ENCODE measurements at regions of chr1 and their contacts with region 1.

Region 1: DNA sequence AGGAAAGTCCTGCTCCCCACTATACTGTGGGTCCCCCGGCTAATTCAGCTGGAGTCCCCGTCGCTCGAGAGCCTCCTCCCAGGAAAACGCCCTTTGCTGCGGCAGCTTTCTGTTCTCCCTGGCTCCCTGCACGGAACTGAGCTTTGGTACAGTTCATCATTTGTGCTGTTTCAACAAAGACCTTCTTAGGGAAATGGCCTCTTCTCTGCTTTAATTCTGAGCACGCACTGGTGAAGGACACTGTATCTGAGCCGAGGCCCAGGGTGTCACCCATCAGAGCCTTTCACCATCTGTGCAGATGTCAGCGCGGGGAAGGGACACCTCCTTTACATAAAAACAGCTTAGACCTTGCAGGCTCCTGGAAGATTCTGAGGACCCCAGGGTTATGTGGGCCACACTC is 13.5 kb upstream of the PEX10 start:
- DNase-seq: no peak
- H3K4me3 ChIP-seq: no peak overlapping the region
- H3K27me3 ChIP-seq: no peaks in the 10 kb centered on the region; the same call in none of the 2 replicates
- CTCF ChIP-seq: no peak

Region 2: DNA sequence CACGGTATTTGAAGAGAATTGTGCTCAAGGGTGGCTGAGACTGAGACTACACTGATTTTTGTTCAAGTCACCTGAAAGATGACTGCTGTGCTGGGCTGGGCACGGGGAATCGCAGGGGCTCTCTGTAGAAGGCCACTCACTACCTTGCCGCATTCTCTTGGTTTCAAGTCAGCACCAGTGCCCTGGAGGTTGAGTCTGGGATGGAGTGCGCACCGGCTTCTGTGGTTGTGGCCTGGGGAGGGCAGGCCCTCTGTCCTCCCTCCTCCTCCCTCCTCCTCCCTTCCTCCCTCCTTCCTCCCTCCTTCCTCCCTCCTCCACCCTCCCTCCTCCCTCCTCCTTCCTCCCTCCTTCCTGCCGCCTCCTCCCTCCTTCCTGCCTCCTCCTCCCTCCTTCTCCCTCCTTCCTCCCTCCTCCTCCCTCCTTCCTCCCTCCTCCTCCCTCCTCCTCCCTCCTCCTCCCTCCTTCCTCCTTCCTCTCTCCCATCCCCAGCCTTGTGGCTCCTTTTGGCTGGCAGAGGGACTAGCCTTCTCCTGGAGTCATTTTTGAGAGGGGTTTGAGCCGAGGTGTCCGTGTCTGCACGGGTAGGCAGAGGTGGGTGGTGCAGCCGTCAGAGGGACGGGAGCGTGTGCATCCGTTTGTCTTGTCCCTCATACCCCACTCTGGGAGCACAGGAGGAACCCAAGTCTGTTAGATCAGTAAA is 24.8 kb before region 1 on chr1:
- CTCF ChIA-PET with region 1: no interaction called
- POLR2A ChIA-PET with region 1: no interaction called
- DNase-seq: no peak
- H3K4me3 ChIP-seq: no peak overlapping the region
- H3K27me3 ChIP-seq: no peaks in the 10 kb centered on the region
- CTCF ChIP-seq: no peak

Region 3: DNA sequence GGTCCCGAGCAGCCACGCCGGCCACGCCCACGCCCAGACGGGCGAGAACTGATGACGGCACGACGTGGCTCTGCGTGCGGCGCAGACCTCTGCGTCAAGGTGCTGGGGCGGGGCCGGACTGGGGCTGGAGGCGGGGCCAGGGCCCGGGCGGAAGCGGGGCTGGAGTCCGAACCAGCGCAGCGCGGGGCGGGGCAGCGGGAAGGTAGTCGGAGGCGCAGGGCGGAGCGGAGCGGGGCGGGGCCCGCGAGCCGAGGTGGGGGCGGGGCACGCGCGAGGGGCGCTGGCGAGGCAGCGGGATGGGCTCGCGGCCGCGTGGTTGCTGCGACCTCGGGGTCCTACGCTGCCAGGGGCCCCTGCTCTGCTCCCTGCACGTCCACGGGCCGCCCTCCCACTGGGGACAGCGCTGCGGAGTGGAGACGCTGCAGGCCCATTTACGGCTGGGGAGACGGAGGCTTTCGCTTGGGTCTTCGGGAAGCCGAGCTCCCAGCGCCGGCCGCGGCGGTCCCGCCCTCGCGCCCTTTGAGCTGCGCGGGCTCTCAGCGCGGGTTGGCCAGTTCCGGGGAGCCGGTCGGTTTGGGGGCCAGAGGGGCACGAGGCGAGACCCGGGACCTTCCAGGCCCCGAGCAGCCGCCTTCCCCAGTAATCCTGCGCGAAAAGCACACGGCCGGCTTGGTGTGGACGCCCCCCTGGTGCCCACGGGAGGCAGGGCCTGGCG is 13.2 kb before region 1 on chr1 and contains the start of gene PEX10:
- CTCF ChIA-PET with region 1: interaction called, 13 read pairs
- POLR2A ChIA-PET with region 1: no interaction called
- DNase-seq: peak; percentile 59
- H3K4me3 ChIP-seq: peak within 1 kb of the TSS; percentile 95
- H3K27me3 ChIP-seq: no peaks in the 10 kb centered on the region
- CTCF ChIP-seq: no peak
- polyA plus RNA-seq, gene PEX10: 17.4 and 23.6 TPM in 2 replicates

Measured in BJ (cell line).